Left colon (tissue), 2 donors: ENCODE measurements at regions of chr3 and their contacts with region 1.

Region 1: GRCh38 chr3:16290007-16290826 is 25.2 kb downstream of the OXNAD1 start:
- DNase-seq: peak in 1 of 2 donors; percentile 53
- ATAC-seq: peak; percentile 56

Region 2: DNA sequence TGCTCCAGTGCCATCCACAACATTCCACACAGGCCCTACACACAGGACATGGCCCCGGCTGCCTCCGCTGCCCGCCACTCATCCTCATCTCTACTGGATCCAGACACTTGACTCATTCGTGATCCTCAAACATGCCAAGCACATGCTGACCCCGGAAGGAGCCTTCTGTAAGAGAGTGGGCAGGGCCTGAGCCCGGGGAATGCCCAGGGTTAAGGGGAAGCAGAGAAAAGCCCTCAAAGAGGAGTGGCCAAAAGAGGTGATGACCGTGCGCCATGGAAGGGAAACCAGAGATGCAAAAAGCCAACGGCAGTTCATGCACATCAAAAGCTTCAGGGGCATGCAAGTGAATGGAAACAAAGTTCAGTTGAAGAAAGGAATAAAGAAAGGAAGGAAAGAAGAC is 177.2 kb after region 1 on chr3:
- intact Hi-C with region 1: no loop called
- DNase-seq: no peak
- ATAC-seq: no peak

Region 3: DNA sequence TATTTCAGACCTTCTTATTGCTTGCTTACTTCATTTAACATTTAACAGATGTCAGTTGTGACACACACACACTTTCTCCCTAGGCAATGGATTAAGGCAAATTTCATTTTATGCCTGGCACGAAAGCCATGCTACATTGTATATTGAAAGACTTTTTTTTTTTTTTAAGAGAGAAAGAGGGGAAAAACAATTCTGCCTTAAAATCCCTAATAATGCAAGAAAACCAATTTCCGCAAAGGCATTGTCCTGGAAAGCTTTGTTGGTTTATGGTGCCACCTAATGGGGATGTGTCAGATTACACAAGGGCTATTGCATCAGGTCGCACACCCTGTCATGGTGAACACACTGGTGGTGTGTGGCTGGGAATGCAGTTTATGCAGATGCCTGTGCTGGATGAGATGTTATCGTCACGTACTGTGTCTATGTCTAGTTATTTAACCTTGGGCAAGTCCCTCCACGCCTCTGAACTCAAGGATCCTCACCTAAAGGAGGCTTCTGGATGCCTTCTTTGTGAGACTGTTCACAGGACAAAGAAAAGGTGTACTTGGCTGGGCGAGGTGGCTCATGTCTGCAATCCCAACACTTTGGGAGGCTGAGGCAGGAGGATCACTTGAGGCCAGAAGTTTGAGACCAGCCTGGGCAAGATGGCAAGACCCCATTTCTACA is 260.6 kb after region 1 on chr3:
- intact Hi-C with region 1: loop called (anchors 5 to 10 kb)
- DNase-seq: peak; percentile 49 to 52
- ATAC-seq: peak; percentile 84